ENCODE measurements at regions of chr11 and their contacts with region 1.

Region 1: DNA sequence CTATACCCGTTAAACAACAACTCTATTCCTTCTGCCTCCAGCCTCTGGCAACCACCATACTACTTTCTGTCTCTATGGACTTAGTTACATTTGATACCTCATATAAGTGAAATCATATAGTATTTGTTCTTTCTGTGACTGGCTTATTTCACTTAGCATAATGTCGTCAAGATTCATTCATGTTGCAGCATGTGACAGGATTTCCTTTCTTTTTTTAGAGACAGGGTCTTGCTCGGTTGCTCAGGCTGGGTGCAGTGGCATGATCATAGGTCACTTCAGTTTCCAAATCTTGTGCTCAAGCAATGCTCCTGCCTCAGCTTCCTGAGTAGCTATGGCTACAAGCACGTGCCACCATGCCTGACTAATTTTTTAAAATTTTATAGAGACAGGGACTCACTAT is 29.4 kb upstream of the SORL1 start:
- DNase-seq: peak; percentile 25
- H3K4me3 Mint-ChIP-seq: peak overlapping the region; percentile 5
- H3K27ac Mint-ChIP-seq: no peak overlapping the region
- H3K4me1 Mint-ChIP-seq: peaks cover 68% of the 10 kb centered on the region
- H3K27me3 Mint-ChIP-seq: no peaks in the 10 kb centered on the region

Region 2: GRCh38 chr11:121446752-121447156 is 24.1 kb after region 1 on chr11:
- CTCF ChIA-PET with region 1: interaction called, 5 read pairs
- POLR2A ChIA-PET with region 1: no interaction called
- intact Hi-C with region 1: loop called (anchors 2 kb)
- DNase-seq: no peak
- H3K4me3 Mint-ChIP-seq: no peak overlapping the region
- H3K27ac Mint-ChIP-seq: peak overlapping the region; percentile 60
- H3K4me1 Mint-ChIP-seq: peaks cover 74% of the 10 kb centered on the region
- H3K27me3 Mint-ChIP-seq: no peaks in the 10 kb centered on the region

Measured in activated CD4-positive, alpha-beta memory T cell treated with anti-CD3 and anti-CD28 coated beads for 36 hours (primary cell).